MCF 10A (cell line): ENCODE measurements at regions of chr15 and their contacts with region 1.

Region 1: DNA sequence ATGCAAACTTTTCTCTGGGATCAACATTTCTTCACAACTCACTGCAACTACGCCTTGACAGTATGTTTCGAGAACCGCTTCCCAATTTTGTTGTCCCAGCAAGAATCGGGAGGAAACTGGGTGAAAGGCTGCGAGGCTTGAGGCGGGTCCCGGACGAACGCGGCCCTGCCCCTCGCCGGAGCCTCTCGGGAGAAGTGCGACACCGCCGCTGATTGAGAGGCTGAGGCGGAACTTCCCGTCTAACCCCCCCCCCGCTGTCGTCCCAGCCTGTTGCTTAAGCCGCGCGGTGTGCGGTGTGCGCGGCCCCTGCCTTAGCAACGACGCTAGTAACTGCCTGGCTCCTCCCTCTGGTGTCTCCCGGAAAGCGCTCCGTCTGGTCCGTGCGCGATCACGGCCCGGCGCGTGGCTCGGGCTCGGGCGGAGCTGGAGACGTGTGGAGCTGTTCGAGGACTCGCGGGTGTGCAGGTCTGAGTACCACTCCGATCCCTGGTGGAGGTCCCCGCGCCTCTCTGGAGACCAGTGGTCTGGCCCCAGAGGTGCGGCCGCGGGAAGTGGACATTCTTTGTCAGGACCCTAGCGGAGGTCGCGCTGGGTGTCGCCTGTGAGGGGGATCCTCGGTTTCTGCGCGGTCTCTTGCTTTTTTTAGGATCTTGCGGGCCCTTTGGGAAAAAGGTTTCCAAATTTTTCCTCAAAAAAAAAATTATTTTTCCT is at the starts of genes DTWD1 and FAM227B:
- DNase-seq: peak; percentile 96
- H3K4me3 Mint-ChIP-seq: peak within 1 kb of the TSS; percentile 92
- H3K27ac Mint-ChIP-seq: peak within 1 kb of the TSS; percentile 98
- H3K4me1 Mint-ChIP-seq: peaks cover 23% of the 10 kb centered on the region
- H3K27me3 Mint-ChIP-seq: no peaks in the 10 kb centered on the region
- CTCF ChIP-seq: no peak
- total RNA-seq, gene DTWD1: 29.6 and 31.0 TPM in 2 replicates
- total RNA-seq, gene FAM227B: 5.8 and 6.4 TPM in 2 replicates

Region 2: DNA sequence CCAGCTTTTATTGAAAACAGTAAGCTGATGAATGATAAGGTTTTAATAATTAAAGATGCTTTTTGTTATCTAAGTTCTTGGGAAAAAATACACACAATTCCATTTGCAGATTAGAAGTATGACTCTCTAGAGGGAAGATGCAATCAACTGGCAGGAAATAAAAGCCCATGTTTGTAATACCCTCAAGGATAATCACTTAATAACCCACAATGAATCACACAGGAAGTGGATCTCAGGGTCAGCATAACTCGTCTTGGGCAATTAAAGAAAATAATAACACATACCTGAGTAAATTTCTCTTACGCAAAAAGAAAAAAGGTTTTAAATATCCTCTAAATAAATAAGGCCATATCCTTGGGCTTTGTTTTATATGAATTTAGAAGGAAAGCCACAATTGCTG is 752.3 kb before region 1 on chr15:
- CTCF ChIA-PET with region 1: no interaction called
- POLR2A ChIA-PET with region 1: interaction called, 4 read pairs
- intact Hi-C with region 1: loop called (anchors 2 kb)
- DNase-seq: peak; percentile 78
- H3K4me3 Mint-ChIP-seq: no peak overlapping the region
- H3K27ac Mint-ChIP-seq: peak overlapping the region; percentile 82
- H3K4me1 Mint-ChIP-seq: peaks cover 39% of the 10 kb centered on the region
- H3K27me3 Mint-ChIP-seq: no peaks in the 10 kb centered on the region
- CTCF ChIP-seq: no peak

Region 3: DNA sequence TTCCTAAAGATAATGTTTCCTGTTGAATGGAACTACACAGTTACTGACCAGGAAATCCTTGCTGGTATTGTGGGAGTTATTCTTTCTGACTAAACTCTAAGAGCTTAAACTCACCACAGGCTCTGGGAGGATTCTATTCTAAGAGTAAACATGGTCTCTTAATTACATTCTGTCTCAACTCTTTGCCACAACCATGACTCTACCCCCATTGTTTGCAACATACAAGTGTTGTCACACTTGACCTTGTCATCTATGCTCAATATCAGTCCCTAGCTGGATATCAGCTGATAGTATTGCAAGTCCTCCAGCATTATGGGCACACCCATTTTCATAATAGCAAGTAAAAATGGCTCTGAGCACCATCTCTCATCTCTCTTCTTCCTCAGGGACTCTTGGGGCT is 544.9 kb before region 1 on chr15:
- CTCF ChIA-PET with region 1: no interaction called
- POLR2A ChIA-PET with region 1: no interaction called
- intact Hi-C with region 1: no loop called
- DNase-seq: no peak
- H3K4me3 Mint-ChIP-seq: no peak overlapping the region
- H3K27ac Mint-ChIP-seq: no peak overlapping the region
- H3K4me1 Mint-ChIP-seq: no peaks in the 10 kb centered on the region
- H3K27me3 Mint-ChIP-seq: peaks cover 21% of the 10 kb centered on the region
- CTCF ChIP-seq: no peak

Region 4: GRCh38 chr15:49421991-49422390 is 198.8 kb before region 1 on chr15:
- CTCF ChIA-PET with region 1: no interaction called
- POLR2A ChIA-PET with region 1: no interaction called
- intact Hi-C with region 1: loop called (anchors 5 kb)
- DNase-seq: peak; percentile 70
- H3K4me3 Mint-ChIP-seq: peak overlapping the region; percentile 58
- H3K27ac Mint-ChIP-seq: no peak overlapping the region
- H3K4me1 Mint-ChIP-seq: peaks cover 7% of the 10 kb centered on the region
- H3K27me3 Mint-ChIP-seq: no peaks in the 10 kb centered on the region
- CTCF ChIP-seq: peak; percentile 72

Region 5: GRCh38 chr15:49558924-49559323 is 61.9 kb before region 1 on chr15:
- CTCF ChIA-PET with region 1: no interaction called
- POLR2A ChIA-PET with region 1: no interaction called
- intact Hi-C with region 1: loop called (anchors 2 kb)
- DNase-seq: peak; percentile 48
- H3K4me3 Mint-ChIP-seq: no peak overlapping the region
- H3K27ac Mint-ChIP-seq: no peak overlapping the region
- H3K4me1 Mint-ChIP-seq: no peaks in the 10 kb centered on the region
- H3K27me3 Mint-ChIP-seq: no peaks in the 10 kb centered on the region
- CTCF ChIP-seq: no peak

Region 6: GRCh38 chr15:49686599-49686998 is 65.8 kb after region 1 on chr15:
- CTCF ChIA-PET with region 1: no interaction called
- POLR2A ChIA-PET with region 1: no interaction called
- intact Hi-C with region 1: no loop called
- DNase-seq: peak; percentile 47
- H3K4me3 Mint-ChIP-seq: no peak overlapping the region
- H3K27ac Mint-ChIP-seq: no peak overlapping the region
- H3K4me1 Mint-ChIP-seq: no peaks in the 10 kb centered on the region
- H3K27me3 Mint-ChIP-seq: no peaks in the 10 kb centered on the region
- CTCF ChIP-seq: no peak

Region 7: DNA sequence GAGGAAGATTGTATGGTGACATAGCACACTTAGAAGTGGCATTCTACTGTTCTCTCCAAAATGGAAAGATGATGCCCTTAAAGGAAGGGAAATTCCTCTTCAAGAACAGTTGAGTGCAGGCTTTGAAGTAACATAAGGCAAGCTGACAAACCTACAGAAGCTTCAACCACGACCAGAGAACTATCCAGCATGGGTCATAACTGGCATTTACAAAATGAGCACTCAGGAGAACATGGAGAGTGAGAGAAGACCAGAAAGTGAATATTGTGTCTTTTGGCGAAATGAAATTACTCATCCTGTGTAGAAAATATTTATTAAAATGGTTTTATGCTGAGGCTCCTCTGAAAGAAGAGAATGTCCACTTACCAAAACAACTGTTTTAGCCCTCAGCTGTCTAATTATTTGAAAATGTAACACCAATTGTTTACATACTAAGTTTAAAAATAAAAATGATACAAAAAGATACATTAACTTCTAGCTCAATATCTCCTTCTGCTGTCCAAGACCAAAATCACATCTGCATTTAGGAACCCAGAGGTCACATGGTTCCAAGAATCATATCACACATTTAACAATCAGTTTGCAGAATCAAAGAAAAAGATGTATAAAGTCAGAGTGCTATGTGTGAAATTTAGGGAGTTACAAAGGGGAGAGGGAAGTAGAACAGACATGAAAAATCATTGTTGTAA is 281.3 kb after region 1 on chr15:
- CTCF ChIA-PET with region 1: interaction called, 7 read pairs
- POLR2A ChIA-PET with region 1: interaction called, 11 read pairs
- intact Hi-C with region 1: loop called (anchors 1 kb)
- DNase-seq: peak; percentile 43
- H3K4me3 Mint-ChIP-seq: no peak overlapping the region
- H3K27ac Mint-ChIP-seq: peak overlapping the region; percentile 14
- H3K4me1 Mint-ChIP-seq: peaks cover 10% of the 10 kb centered on the region
- H3K27me3 Mint-ChIP-seq: no peaks in the 10 kb centered on the region
- CTCF ChIP-seq: peak; percentile 52

Region 8: DNA sequence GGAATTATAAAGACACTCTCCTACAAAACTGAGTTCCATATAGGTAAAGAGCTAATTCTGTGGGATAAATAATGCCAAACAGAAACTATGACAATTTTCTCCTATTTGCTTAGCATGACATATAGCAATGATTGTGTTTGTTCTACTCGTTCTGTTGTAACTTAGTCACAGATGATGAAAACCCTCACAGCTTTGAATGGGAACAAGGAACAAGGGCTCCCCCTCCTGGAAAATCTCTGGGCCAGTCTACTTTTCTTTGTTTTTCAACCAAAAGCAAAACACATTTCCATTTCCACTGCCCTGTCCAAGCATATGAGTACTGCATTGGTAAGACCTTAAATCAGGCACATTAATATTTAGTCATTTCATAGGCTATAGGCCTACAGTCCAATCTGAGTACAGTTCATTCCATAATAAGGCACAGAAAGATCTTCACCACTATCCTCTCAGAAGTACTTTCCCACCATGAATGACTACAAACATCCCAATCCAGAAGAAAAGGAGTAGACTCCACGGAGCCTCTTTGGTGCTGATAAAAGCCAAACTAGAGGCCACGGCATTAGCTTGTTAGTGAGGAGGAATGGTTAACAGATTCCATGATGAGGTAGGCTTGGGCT is 431.1 kb after region 1 on chr15:
- CTCF ChIA-PET with region 1: interaction called, 3 read pairs
- POLR2A ChIA-PET with region 1: interaction called, 3 read pairs
- intact Hi-C with region 1: loop called (anchors 5 kb)
- DNase-seq: peak; percentile 79
- H3K4me3 Mint-ChIP-seq: no peak overlapping the region
- H3K27ac Mint-ChIP-seq: peak overlapping the region; percentile 51
- H3K4me1 Mint-ChIP-seq: peaks cover 11% of the 10 kb centered on the region
- H3K27me3 Mint-ChIP-seq: no peaks in the 10 kb centered on the region
- CTCF ChIP-seq: peak; percentile 79